K562 (cell line): ENCODE measurements at regions of chr10 and their contacts with region 1.

Region 1: DNA sequence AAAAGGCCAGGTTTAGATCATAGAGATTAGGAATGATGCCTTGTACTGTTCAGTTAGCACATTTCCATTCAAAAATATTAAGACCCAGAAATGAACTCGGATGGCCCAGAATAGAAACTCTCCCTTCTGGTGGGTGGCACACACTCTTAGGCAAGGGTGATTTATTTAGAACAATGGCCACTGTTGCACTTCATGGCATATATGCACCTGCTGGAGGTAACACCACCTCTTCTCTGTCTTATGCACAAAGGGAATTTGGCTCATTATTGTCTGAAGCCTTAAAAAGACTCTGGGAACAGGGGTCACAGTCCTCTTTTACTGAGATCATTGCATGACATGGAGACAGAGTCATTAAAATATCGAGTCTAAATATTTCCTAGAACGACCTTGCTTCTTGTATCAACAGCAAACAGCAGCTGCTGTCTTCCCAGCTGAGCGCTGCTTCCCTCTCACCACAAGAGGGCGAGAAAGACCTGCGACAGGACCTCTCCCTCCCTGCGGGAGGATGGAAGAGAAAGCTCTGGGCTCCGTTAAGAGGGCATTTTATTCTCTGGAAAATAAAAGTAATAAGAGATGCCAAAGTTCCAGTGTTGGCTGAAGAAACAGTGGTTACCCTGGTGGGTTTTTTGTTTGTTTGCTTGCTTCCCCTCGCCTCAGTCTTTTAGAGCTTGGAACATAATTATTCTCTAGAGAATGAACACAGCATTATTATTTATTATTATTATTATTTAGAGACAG is 13.6 kb upstream of the BAMBI start:
- DNase-seq: peak; percentile 77 to 87 (median 82)
- ATAC-seq: peak; percentile 95
- H3K4me3 ChIP-seq: no peak overlapping the region
- H3K27ac ChIP-seq: no peak overlapping the region
- H3K4me1 ChIP-seq: peaks cover 0 to 4% of the 10 kb centered on the region in 2 experiments; a peak in 2 of 5 replicates
- H3K27me3 ChIP-seq: peaks cover 0 to 10% of the 10 kb centered on the region in 2 experiments; a peak in 4 of 5 replicates
- CTCF ChIP-seq: peak; percentile 94 to 98 (median 98)
- EP300 ChIP-seq: no peak
- POLR2A ChIP-seq: no peak
- RAD21 ChIP-seq: peak; percentile 97 to 99

Region 2: DNA sequence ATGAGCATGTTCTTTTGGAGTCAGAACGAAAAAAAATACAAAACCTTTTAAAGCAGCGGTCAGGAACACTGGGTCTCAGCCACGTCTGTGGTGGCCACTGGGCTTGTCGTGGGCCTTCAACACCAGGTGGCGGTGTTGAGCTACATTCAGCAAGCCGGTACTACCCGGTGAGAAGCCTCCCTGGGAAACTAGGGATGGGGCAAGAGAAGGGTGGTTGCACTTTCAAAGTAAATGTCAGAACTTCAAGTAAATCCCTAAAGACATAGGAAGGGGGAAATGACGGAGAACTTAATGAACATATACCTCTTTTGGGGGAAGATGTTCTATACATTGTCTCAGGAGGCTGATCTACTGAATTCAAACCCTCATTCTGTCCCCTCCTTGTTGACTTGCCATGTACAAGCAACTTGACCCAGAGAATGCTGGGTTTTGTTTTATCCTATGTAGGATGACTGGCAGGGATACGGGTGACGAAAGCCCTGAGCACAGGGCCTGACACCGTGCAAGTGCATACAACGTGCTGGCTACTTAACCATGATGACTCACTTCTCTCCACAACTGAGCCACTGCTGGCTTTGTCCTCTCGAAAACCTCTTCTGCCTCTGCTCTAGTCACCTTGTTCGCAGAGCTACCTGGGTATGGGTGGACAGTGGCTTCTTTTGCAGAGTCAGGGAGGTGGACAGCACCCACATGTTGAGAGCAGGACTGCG is 35.4 kb before region 1 on chr10:
- CTCF ChIA-PET with region 1: interaction called, 5 read pairs
- POLR2A ChIA-PET with region 1: no interaction called
- in situ Hi-C with region 1: no loop called
- intact Hi-C with region 1: loop called (anchors 5 kb)
- DNase-seq: peak; percentile 82 to 88 (median 87)
- ATAC-seq: peak; percentile 96
- H3K4me3 ChIP-seq: no peak overlapping the region
- H3K27ac ChIP-seq: no peak overlapping the region
- H3K4me1 ChIP-seq: no peaks in the 10 kb centered on the region; a peak in 1 of 5 replicates
- H3K27me3 ChIP-seq: peaks cover 15 to 48% of the 10 kb centered on the region in 2 experiments; a peak in 4 of 5 replicates
- CTCF ChIP-seq: peak; percentile 92 to 93 (median 92)
- EP300 ChIP-seq: no peak
- POLR2A ChIP-seq: no peak
- RAD21 ChIP-seq: peak; percentile 91 to 97

Region 3: DNA sequence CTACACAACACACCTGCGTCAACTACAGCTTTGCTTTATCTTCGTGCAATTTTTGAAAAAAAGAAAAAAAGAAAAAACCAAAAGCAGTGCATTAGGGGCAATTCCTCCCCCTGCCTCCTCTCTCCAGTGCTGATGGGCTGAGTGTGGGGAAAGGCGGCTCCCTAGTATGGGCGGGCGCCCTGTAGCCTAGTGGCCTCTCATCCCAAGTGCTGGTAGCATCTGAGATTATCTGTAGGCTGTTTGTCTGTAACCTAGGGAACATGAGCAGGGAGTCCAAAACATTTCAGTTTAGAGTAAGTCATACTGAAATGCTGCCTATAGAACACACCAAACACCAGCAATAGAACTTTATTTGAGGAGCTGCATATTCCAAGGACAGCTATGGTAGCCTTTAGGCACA is 11.0 kb before region 1 on chr10:
- CTCF ChIA-PET with region 1: no interaction called
- POLR2A ChIA-PET with region 1: no interaction called
- in situ Hi-C with region 1: no loop called
- intact Hi-C with region 1: no loop called
- DNase-seq: no peak
- ATAC-seq: 0 out of 3 replicates have a peak, but pooled peaks have one; percentile 42
- H3K4me3 ChIP-seq: no peak overlapping the region
- H3K27ac ChIP-seq: no peak overlapping the region
- H3K4me1 ChIP-seq: no peaks in the 10 kb centered on the region; a peak in 1 of 5 replicates
- H3K27me3 ChIP-seq: peaks cover 9 to 18% of the 10 kb centered on the region in 2 experiments
- CTCF ChIP-seq: no peak
- EP300 ChIP-seq: no peak
- POLR2A ChIP-seq: no peak
- RAD21 ChIP-seq: no peak

Region 4: DNA sequence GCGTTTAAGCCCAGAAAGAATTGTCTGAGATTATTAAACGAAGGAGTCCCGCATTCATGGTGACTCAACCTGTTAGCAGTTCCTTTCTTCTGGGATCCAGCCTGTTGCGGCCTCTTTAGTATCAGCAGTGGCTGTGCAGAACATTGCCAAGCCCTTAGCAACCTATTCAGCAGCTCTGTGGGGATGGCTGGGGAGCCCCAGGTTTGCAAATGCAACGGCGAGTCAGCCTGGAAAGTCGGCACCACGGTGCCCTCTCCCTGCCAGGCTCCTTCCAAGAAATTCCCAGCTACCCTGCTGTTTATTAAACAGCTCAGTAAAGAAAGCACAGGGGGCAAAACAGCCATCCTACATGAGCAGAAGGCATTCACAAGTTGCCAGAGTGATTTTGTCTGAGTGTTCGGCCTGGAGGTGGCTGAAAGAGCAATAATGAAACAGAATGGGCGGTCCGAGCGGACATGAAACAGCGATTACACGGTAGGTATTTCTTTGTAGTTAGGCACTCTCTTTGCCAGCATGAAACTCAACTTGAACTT is 211.9 kb after region 1 on chr10:
- CTCF ChIA-PET with region 1: interaction called, 13 read pairs
- POLR2A ChIA-PET with region 1: no interaction called
- in situ Hi-C with region 1: no loop called
- intact Hi-C with region 1: loop called (anchors 1 kb)
- DNase-seq: no peak
- ATAC-seq: no peak
- H3K4me3 ChIP-seq: no peak overlapping the region
- H3K27ac ChIP-seq: no peak overlapping the region
- H3K4me1 ChIP-seq: peaks cover 0 to 3% of the 10 kb centered on the region in 2 experiments; a peak in 1 of 5 replicates
- H3K27me3 ChIP-seq: no peaks in the 10 kb centered on the region
- CTCF ChIP-seq: no peak
- EP300 ChIP-seq: no peak
- POLR2A ChIP-seq: no peak
- RAD21 ChIP-seq: no peak

Region 5: DNA sequence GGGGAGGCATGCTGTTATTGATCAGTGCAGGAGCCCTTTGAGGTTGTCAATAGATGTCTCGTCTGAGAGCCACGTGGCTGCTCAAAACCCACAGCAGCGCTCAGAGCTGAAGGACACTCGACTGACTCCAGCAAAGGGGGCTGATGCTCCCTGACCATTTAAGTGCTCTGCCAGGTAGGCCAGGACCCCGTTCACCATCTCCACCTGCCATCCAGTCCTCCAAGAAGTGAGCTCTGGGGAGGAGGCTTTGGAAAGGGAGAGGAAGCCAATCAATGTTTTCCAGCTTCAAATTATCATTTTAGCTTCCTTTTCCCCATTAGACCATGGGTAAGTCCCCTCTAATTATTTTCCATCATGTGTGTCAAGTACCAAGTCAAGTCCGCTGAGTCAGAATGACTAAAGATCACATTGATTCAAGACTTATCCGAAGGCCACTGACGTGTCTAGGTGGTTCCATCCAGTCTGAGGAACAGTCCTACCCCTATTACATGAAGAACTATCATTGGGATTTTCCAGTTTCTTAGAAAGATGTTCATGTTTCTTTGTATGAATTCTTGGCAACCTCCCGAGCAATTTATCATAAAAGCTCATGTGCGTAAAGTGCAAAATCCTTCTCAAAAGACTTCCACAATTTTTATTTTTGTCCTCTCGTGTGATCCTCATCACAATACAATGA is 322.5 kb after region 1 on chr10:
- CTCF ChIA-PET with region 1: interaction called, 22 read pairs
- POLR2A ChIA-PET with region 1: interaction called, 5 read pairs
- in situ Hi-C with region 1: loop called (anchors 5 kb)
- intact Hi-C with region 1: loop called (anchors 1 kb)
- DNase-seq: peak in 2 of 4 experiments; percentile 60 to 72
- ATAC-seq: peak; percentile 63
- H3K4me3 ChIP-seq: no peak overlapping the region
- H3K27ac ChIP-seq: peak overlapping the region; percentile 30; the same call in 1 of the 3 replicates
- H3K4me1 ChIP-seq: peaks cover 8 to 31% of the 10 kb centered on the region in 2 experiments; a peak in 4 of 5 replicates
- H3K27me3 ChIP-seq: no peaks in the 10 kb centered on the region
- CTCF ChIP-seq: no peak
- EP300 ChIP-seq: peak; percentile 61
- POLR2A ChIP-seq: no peak
- RAD21 ChIP-seq: no peak

Region 6: DNA sequence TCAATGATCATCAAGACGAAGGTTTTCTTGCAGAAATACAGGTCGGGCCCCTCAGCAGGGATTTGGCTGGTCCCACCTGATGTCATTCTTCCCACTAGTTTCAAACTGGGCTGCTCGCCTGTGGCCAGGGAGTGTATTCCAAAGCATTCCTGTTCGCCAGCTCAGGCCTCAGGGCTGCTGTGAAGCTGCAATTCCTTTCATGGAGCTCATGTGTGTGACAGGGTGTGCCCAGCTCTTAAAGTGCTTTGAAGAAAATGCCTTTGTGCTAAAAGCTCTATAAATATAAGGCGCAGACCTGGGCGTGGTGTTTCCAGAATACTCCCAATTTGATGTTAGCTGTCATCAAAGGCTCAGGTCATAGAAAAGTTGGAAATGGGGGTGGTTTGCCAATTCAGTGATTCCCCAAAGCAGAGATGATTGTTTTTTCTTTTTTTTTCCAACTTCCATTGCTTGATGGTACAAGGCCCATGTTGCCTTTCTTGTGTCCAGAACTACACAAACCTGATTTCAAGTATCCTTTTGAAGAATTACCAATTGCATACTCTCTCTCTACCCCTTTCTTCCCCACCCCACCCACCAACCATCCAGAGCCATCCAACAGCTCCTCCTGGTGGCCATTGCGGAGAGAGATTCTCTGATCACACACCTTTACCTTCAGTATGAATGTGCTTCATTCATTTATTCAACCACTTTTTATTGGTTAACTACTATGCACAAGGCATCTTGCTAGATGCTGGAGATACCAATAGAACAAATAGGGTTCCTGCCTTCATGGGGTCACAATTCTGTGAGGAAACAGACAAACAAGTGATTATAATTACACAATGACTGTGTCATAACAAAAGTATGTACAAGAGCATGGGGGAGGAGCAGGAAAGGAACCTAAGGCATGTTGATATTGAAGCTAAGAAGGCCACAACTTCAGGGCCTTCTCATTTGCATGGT is 327.9 kb after region 1 on chr10:
- CTCF ChIA-PET with region 1: interaction called, 22 read pairs
- POLR2A ChIA-PET with region 1: interaction called, 5 read pairs
- in situ Hi-C with region 1: loop called (anchors 5 kb)
- intact Hi-C with region 1: loop called (anchors 1 kb)
- DNase-seq: peak; percentile 62 to 79 (median 71)
- ATAC-seq: peak; percentile 96
- H3K4me3 ChIP-seq: no peak overlapping the region
- H3K27ac ChIP-seq: no peak overlapping the region
- H3K4me1 ChIP-seq: peaks cover 0 to 4% of the 10 kb centered on the region in 2 experiments; a peak in 4 of 5 replicates
- H3K27me3 ChIP-seq: peaks cover 2 to 8% of the 10 kb centered on the region in 2 experiments; a peak in 1 of 5 replicates
- CTCF ChIP-seq: peak; percentile 90 to 93 (median 90)
- EP300 ChIP-seq: no peak
- POLR2A ChIP-seq: no peak
- RAD21 ChIP-seq: peak; percentile 97 to 99

Region 7: DNA sequence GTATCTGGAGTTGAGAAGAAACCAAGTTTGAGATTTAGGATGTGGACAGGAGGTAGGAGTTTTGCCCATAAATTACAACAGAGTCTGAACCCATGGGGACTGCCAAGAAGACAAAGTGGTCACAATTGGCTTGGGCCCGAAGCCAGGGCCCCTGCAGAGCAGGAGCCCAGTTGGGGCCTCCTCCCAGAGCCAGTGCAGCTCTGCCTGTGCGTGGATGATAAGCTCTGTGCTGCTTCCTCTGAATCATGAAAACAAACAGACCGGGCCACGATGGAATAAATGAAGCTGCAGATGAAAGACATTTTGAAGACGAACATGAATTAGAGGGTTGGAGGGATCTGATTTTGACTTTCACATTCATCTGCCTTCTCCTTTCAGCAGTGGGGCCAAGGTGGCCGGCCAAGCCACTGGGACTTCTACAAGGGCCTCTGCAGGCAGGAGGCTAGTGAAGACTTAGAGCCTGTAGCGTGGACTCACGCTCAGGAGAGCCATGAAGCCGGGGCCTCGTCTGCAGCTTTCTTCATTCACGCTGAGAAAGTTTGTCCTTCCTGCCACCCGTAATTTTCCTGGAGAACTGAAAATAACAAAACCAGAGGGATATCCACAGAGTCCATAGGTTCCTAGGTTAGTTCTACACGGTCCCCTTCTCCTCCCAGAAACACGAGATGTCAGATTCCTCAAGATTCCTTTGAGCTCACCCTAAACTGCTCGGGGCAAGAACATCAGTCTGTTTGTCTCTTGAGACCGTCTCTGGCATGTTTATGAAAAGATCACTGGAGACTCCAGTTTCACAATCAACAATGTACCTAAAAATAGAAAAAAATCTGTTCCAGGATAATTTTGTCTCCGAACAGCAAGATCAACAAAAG is 468.4 kb after region 1 on chr10:
- CTCF ChIA-PET with region 1: no interaction called
- POLR2A ChIA-PET with region 1: interaction called, 3 read pairs
- in situ Hi-C with region 1: loop called (anchors 25 kb)
- intact Hi-C with region 1: loop called (anchors 5 kb)
- DNase-seq: peak; percentile 50 to 92 (median 74)
- ATAC-seq: peak; percentile 97
- H3K4me3 ChIP-seq: peak overlapping the region; percentile 4; the same call in 1 of the 2 replicates
- H3K27ac ChIP-seq: peak overlapping the region; percentile 70
- H3K4me1 ChIP-seq: peaks cover 15 to 29% of the 10 kb centered on the region in 2 experiments
- H3K27me3 ChIP-seq: no peaks in the 10 kb centered on the region
- CTCF ChIP-seq: no peak
- EP300 ChIP-seq: peak; percentile 91
- POLR2A ChIP-seq: no peak
- RAD21 ChIP-seq: peak; percentile 6 to 16; a peak in 1 of 4 replicates

Region 8: GRCh38 chr10:29304264-29305030 is 640.7 kb after region 1 on chr10:
- CTCF ChIA-PET with region 1: interaction called, 7 read pairs
- POLR2A ChIA-PET with region 1: no interaction called
- in situ Hi-C with region 1: loop called (anchors 10 kb)
- intact Hi-C with region 1: loop called (anchors 10 kb)
- DNase-seq: peak; percentile 63 to 67 (median 65)
- ATAC-seq: peak; percentile 80
- H3K4me3 ChIP-seq: no peak overlapping the region
- H3K27ac ChIP-seq: no peak overlapping the region
- H3K4me1 ChIP-seq: no peaks in the 10 kb centered on the region
- H3K27me3 ChIP-seq: peaks cover 8 to 18% of the 10 kb centered on the region in 2 experiments; a peak in 4 of 5 replicates
- CTCF ChIP-seq: peak; percentile 66 to 78 (median 76)
- EP300 ChIP-seq: no peak
- POLR2A ChIP-seq: no peak
- RAD21 ChIP-seq: peak; percentile 95